CD4-positive, alpha-beta T cell (primary cell): ENCODE measurements at regions of chr22 and their contacts with region 1.

Region 1: GRCh38 chr22:20463324-20464095 is 25.9 kb upstream of the SCARF2 start:
- DNase-seq: peak in 13 of 14 experiments; percentile 21 to 84 (median 40)
- ATAC-seq: peak; percentile 62
- H3K4me3 ChIP-seq: peak overlapping the region; percentile 0
- H3K4me3 Mint-ChIP-seq: peak overlapping the region; percentile 81
- H3K27ac ChIP-seq: peak overlapping the region; percentile 82 to 88
- H3K27ac Mint-ChIP-seq: peak overlapping the region; percentile 96
- H3K4me1 ChIP-seq: peaks cover 71% of the 10 kb centered on the region
- H3K4me1 Mint-ChIP-seq: peaks cover 68% of the 10 kb centered on the region
- H3K27me3 ChIP-seq: no peaks in the 10 kb centered on the region
- H3K27me3 Mint-ChIP-seq: no peaks in the 10 kb centered on the region
- CTCF ChIP-seq: no peak

Region 2: GRCh38 chr22:20418211-20418788 is 45.2 kb before region 1 on chr22:
- CTCF ChIA-PET with region 1: interaction called, 11 read pairs
- POLR2A ChIA-PET with region 1: interaction called, 17 read pairs
- intact Hi-C with region 1: no loop called
- DNase-seq: peak; percentile 58 to 90 (median 69)
- ATAC-seq: peak; percentile 84
- H3K4me3 ChIP-seq: peak overlapping the region; percentile 46
- H3K4me3 Mint-ChIP-seq: peak overlapping the region; percentile 60
- H3K27ac ChIP-seq: no peak overlapping the region
- H3K27ac Mint-ChIP-seq: no peak overlapping the region
- H3K4me1 ChIP-seq: peaks cover 10% of the 10 kb centered on the region
- H3K4me1 Mint-ChIP-seq: peaks cover under 1% of the 10 kb centered on the region
- H3K27me3 ChIP-seq: peaks cover 0 to 5% of the 10 kb centered on the region in 2 experiments
- H3K27me3 Mint-ChIP-seq: no peaks in the 10 kb centered on the region
- CTCF ChIP-seq: peak; percentile 92

Region 3: DNA sequence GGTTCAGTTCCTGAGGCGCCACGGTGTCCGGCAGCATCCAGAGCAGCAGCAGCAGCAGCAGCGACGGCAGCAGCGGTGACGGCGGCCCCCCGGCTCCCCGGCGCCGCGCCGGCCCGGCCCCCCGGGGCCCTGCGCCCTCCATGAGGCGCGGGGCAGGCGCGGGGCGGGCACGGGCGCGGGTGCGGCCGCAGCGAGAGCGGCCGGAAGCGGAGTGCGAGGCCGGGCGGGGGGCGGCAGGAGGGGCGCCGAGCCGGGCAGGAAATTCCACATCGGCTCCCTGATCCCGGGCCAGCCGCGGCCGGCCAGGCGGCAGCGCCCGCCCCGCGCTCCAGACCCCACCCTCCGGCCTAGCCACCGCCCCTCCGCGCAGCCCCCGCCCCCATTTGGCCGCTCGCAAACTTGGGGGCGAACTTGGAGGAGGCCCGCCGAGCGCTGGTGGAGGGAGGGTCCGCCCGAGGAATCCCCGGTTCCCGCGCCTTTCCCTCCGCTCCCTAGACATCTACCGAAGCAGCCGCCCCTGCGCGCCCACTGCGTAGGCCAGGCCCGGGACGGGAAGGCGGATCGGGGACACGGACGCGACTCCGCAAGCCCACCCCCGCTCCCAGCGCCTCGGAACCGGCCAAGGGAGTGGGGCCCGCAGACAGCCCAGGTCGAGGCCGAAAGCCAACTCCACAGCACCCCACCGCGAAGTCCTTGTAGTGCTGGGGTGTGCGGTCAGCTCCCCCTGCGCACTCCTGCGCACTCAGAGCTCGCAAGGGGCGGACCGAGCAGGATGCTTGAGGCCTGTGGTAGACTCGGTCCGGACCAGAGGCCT is 25.7 kb before region 1 on chr22 and contains the start of gene SCARF2:
- CTCF ChIA-PET with region 1: no interaction called
- POLR2A ChIA-PET with region 1: interaction called, 67 read pairs
- intact Hi-C with region 1: no loop called
- DNase-seq: peak in 1 of 14 experiments; percentile 20
- ATAC-seq: peak; percentile 41
- H3K4me3 ChIP-seq: peak within 1 kb of the TSS; percentile 36
- H3K4me3 Mint-ChIP-seq: peak within 1 kb of the TSS; percentile 86
- H3K27ac ChIP-seq: no peak within 1 kb of the TSS
- H3K27ac Mint-ChIP-seq: no peak within 1 kb of the TSS
- H3K4me1 ChIP-seq: peaks cover 26% of the 10 kb centered on the region
- H3K4me1 Mint-ChIP-seq: peaks cover 22% of the 10 kb centered on the region
- H3K27me3 ChIP-seq: peaks cover 32 to 41% of the 10 kb centered on the region in 2 experiments
- H3K27me3 Mint-ChIP-seq: peaks cover 46% of the 10 kb centered on the region
- CTCF ChIP-seq: no peak
- total RNA-seq, gene SCARF2: 2.5 to 3.1 TPM

Region 4: GRCh38 chr22:20495861-20496681 is 32.6 kb after region 1 on chr22:
- CTCF ChIA-PET with region 1: interaction called, 5 read pairs
- POLR2A ChIA-PET with region 1: interaction called, 56 read pairs
- intact Hi-C with region 1: loop called in 1 of 2 experiments (anchors 1 kb)
- DNase-seq: peak; percentile 79 to 97 (median 88)
- ATAC-seq: peak; percentile 95
- H3K4me3 ChIP-seq: peak overlapping the region; percentile 91
- H3K4me3 Mint-ChIP-seq: peak overlapping the region; percentile 94
- H3K27ac ChIP-seq: peak overlapping the region; percentile 93 to 94
- H3K27ac Mint-ChIP-seq: peak overlapping the region; percentile 84
- H3K4me1 ChIP-seq: peaks cover 51% of the 10 kb centered on the region
- H3K4me1 Mint-ChIP-seq: peaks cover 50% of the 10 kb centered on the region
- H3K27me3 ChIP-seq: no peaks in the 10 kb centered on the region
- H3K27me3 Mint-ChIP-seq: no peaks in the 10 kb centered on the region
- CTCF ChIP-seq: peak; percentile 80

Region 5: GRCh38 chr22:20550821-20551744 is 87.6 kb after region 1 on chr22:
- CTCF ChIA-PET with region 1: no interaction called
- POLR2A ChIA-PET with region 1: interaction called, 64 read pairs
- intact Hi-C with region 1: loop called in 1 of 2 experiments (anchors 10 kb)
- DNase-seq: peak; percentile 32 to 79 (median 56)
- ATAC-seq: peak; percentile 24
- H3K4me3 ChIP-seq: peak overlapping the region; percentile 29
- H3K4me3 Mint-ChIP-seq: peak overlapping the region; percentile 87
- H3K27ac ChIP-seq: peak overlapping the region; percentile 86 to 89
- H3K27ac Mint-ChIP-seq: peak overlapping the region; percentile 92
- H3K4me1 ChIP-seq: peaks cover 96% of the 10 kb centered on the region
- H3K4me1 Mint-ChIP-seq: peaks cover 85% of the 10 kb centered on the region
- H3K27me3 ChIP-seq: no peaks in the 10 kb centered on the region
- H3K27me3 Mint-ChIP-seq: no peaks in the 10 kb centered on the region
- CTCF ChIP-seq: no peak

Region 6: GRCh38 chr22:20621162-20621561 is 157.7 kb after region 1 on chr22:
- CTCF ChIA-PET with region 1: no interaction called
- POLR2A ChIA-PET with region 1: no interaction called
- intact Hi-C with region 1: no loop called
- DNase-seq: no peak
- ATAC-seq: no peak
- H3K4me3 ChIP-seq: no peak overlapping the region
- H3K4me3 Mint-ChIP-seq: no peak overlapping the region
- H3K27ac ChIP-seq: no peak overlapping the region
- H3K27ac Mint-ChIP-seq: no peak overlapping the region
- H3K4me1 ChIP-seq: no peaks in the 10 kb centered on the region
- H3K4me1 Mint-ChIP-seq: no peaks in the 10 kb centered on the region
- H3K27me3 ChIP-seq: no peaks in the 10 kb centered on the region
- H3K27me3 Mint-ChIP-seq: no peaks in the 10 kb centered on the region
- CTCF ChIP-seq: no peak